GM18951 (cell line): ENCODE measurements at regions of chr14 and their contacts with region 1.

Region 1: GRCh38 chr14:50099335-50099734 is 17.0 kb downstream of the VCPKMT start:
- POLR2A ChIP-seq: no peak

Region 2: GRCh38 chr14:49867831-49868723 is 231.3 kb before region 1 on chr14:
- in situ Hi-C with region 1: loop called (anchors 5 kb)
- POLR2A ChIP-seq: peak; percentile 89

Region 3: DNA sequence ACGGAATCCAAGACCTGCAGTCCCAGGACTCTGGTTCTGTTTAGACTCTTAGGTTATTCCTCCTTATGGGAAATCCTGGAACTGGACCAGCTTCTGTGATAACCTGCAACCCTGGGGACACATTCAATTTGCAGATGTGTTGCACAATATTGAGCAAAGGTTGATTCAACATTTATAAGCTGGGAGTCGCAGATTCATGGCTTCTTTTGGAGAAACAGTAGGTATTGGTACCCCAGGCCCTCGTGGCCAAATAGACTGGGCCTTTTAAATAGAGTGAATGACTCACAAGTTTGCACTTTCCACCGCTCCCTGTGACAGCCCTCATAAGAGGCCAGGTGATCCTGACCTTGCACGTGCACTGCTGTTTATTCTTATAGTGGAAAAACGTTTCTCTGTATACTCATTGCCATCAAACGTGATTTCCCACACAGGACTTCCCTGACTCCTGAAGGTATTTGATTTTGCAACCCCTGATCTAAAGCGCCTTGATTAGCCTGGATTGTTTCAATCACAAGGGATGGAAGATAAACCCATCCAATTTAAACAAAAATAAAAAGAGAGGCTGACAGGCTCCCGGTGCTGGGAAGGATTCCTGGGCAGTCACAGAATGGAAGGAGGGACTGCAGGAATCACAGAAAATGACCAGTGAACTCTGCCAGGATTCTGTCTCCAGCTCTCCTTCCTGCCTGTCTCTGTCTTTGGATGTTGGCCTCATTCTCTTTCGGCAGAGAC is 81.0 kb before region 1 on chr14:
- in situ Hi-C with region 1: no loop called
- POLR2A ChIP-seq: no peak

Region 4: GRCh38 chr14:50045039-50045711 is 54.2 kb before region 1 on chr14:
- in situ Hi-C with region 1: loop called (anchors 10 kb)
- POLR2A ChIP-seq: peak; percentile 32